CD4-positive, alpha-beta memory T cell (primary cell): ENCODE measurements at regions of chr1 and their contacts with region 1.

Region 1: DNA sequence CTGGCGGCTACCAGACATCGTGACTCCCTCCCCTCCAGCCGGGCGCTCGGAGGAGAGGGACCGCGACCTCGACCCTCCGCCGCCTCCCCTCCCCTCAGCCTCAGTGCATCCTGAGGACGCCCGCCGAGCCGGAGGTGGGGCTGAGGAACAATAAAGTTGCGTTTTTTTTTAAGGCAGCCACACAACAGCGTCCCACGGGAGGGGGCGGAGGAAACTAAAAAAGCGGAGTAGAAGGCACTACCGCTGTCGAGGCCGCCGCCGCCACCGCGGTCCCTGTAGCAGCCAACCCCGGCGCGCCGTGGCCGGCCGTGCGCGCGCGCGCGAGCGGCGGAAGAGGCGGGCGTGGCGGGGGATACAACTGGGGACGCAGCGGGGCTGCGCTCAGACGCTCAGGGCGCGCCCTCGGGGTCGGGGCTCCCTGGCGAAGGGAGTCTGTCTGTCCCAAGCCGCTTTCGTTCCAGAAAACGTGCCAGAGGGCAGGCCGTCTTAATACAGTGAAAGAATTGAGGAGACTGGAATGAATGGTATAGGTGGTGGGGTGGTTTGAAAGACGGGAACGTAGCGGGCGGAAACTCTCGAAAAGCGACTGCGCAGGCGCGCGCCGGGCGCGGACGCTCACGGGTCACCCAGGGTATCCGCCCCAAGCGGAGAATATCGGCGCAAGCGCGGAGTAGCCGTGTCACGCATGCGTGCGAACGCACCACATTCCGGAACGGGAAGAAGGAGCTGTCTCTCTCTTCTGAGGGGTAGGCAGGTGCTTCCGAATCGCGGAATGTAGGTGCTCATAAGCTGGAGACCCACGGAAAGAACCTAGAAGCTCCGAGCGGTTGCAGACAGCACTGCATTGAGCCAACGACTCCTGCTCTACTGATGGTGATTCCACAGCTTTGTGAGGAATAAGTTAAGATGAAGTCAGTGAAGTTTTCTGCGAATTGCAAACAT is at the start of gene COP1:
- DNase-seq: peak; percentile 96 to 98 (median 97)
- H3K4me3 ChIP-seq: peak within 1 kb of the TSS; percentile 64 to 95
- H3K4me3 Mint-ChIP-seq: peak within 1 kb of the TSS; percentile 98 to 100 (median 99)
- H3K27ac ChIP-seq: peak within 1 kb of the TSS; percentile 83
- H3K27ac Mint-ChIP-seq: peak within 1 kb of the TSS; percentile 98 to 99 (median 99)
- H3K4me1 ChIP-seq: peaks cover 45% of the 10 kb centered on the region
- H3K4me1 Mint-ChIP-seq: peaks cover 25 to 54% (median 40%) of the 10 kb centered on the region in 4 donors
- H3K27me3 ChIP-seq: no peaks in the 10 kb centered on the region
- H3K27me3 Mint-ChIP-seq: peaks cover 0 to 4% of the 10 kb centered on the region in 2 donors
- total RNA-seq, gene COP1: 44.6 to 45.1 TPM

Region 2: GRCh38 chr1:176196728-176197127 is 10.5 kb before region 1 on chr1:
- CTCF ChIA-PET with region 1: no interaction called
- POLR2A ChIA-PET with region 1: interaction called, 4 read pairs
- intact Hi-C with region 1: loop called (anchors 1 kb)
- DNase-seq: no peak
- H3K4me3 ChIP-seq: no peak overlapping the region
- H3K4me3 Mint-ChIP-seq: peak overlapping the region; percentile 59 to 86 (median 78)
- H3K27ac ChIP-seq: no peak overlapping the region
- H3K27ac Mint-ChIP-seq: peak overlapping the region in 2 of 7 donors; percentile 6 to 62
- H3K4me1 ChIP-seq: peaks cover 65% of the 10 kb centered on the region
- H3K4me1 Mint-ChIP-seq: peaks cover 58 to 92% (median 76%) of the 10 kb centered on the region in 4 donors
- H3K27me3 ChIP-seq: no peaks in the 10 kb centered on the region
- H3K27me3 Mint-ChIP-seq: no peaks in the 10 kb centered on the region

Region 3: DNA sequence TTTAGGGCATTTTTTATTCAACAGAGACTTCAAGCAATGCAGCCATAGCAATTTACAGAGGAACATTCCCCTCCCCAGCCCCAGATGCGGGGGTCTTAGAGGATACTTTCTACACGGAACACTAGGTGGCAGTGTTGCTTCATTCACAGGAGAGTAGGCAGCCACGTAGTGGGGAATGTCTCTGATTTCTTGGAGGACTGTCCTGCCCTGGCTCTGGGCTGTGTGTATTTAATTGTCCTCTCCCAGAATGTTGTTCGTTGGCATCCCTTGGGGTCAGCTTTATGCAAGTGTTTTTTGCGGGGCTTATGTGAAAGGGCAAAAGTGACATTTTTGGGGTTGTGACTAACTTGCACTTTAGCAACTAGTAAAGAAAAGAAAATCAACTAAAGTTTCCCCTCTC is 352.6 kb after region 1 on chr1:
- CTCF ChIA-PET with region 1: no interaction called
- POLR2A ChIA-PET with region 1: no interaction called
- intact Hi-C with region 1: no loop called
- DNase-seq: no peak
- H3K4me3 ChIP-seq: no peak overlapping the region
- H3K4me3 Mint-ChIP-seq: no peak overlapping the region
- H3K27ac ChIP-seq: no peak overlapping the region
- H3K27ac Mint-ChIP-seq: no peak overlapping the region
- H3K4me1 ChIP-seq: no peaks in the 10 kb centered on the region
- H3K4me1 Mint-ChIP-seq: peaks cover 0 to 1% (median 0%) of the 10 kb centered on the region in 4 donors
- H3K27me3 ChIP-seq: no peaks in the 10 kb centered on the region
- H3K27me3 Mint-ChIP-seq: no peaks in the 10 kb centered on the region